ENCODE measurements at regions of chr20 and their contacts with region 1.

Region 1: GRCh38 chr20:9359561-9360308 is 154.7 kb upstream of the LAMP5 start:
- DNase-seq: peak; percentile 75
- H3K4me3 ChIP-seq: peak overlapping the region; percentile 46
- H3K27ac ChIP-seq: no peak overlapping the region
- H3K4me1 ChIP-seq: no peaks in the 10 kb centered on the region
- H3K27me3 ChIP-seq: no peaks in the 10 kb centered on the region

Region 2: GRCh38 chr20:8790442-8791074 is 569.2 kb before region 1 on chr20:
- in situ Hi-C with region 1: loop called (anchors 25 kb)
- DNase-seq: peak; percentile 64
- H3K4me3 ChIP-seq: no peak overlapping the region
- H3K27ac ChIP-seq: no peak overlapping the region
- H3K4me1 ChIP-seq: 0 out of 2 replicates have a peak, but pooled peaks cover 3% of the 10 kb centered on the region
- H3K27me3 ChIP-seq: no peaks in the 10 kb centered on the region

Region 3: DNA sequence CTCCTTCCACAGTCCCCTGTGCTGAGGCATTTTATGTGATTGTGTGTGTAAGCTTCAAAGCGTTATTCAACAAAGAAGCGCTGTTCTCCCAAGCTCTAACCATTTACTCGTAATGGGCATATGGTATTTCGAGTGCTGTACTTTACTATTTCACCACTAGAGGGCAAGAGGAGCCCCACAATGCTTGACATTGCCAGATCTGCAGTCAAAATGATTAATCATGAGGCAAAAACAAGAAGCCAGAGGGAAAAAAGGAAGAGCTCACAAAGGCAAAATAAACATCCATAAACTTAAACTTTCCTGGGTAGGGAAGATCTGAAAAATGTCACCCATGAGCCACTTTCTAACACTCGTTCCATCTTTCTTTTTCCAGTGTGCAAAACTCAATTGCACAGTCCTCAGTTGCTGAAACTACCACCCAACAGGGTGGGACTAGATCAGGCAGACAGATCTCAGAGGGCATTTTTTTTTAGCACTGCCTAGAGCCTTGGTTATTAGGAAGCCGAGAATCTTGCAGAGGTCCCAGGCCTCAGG is 505.9 kb before region 1 on chr20:
- in situ Hi-C with region 1: loop called (anchors 10 kb)
- DNase-seq: peak; percentile 75
- H3K4me3 ChIP-seq: peak overlapping the region; percentile 60
- H3K27ac ChIP-seq: peak overlapping the region; percentile 46
- H3K4me1 ChIP-seq: peaks cover 26% of the 10 kb centered on the region
- H3K27me3 ChIP-seq: no peaks in the 10 kb centered on the region

Region 4: GRCh38 chr20:9807136-9807535 is 447.4 kb after region 1 on chr20:
- in situ Hi-C with region 1: no loop called
- DNase-seq: no peak
- H3K4me3 ChIP-seq: no peak overlapping the region
- H3K27ac ChIP-seq: no peak overlapping the region
- H3K4me1 ChIP-seq: no peaks in the 10 kb centered on the region
- H3K27me3 ChIP-seq: no peaks in the 10 kb centered on the region

Measured in GM23248 (cell line).